B cell (primary cell): ENCODE measurements at regions of chr10 and their contacts with region 1.

Region 1: GRCh38 chr10:69123747-69124562 is at the start of gene VPS26A:
- DNase-seq: peak; percentile 99
- ATAC-seq: peak; percentile 96
- H3K4me3 ChIP-seq: peak within 1 kb of the TSS; percentile 57 to 92 (median 84)
- H3K4me3 Mint-ChIP-seq: peak within 1 kb of the TSS; percentile 93
- H3K27ac ChIP-seq: peak within 1 kb of the TSS; percentile 89 to 95
- H3K27ac Mint-ChIP-seq: peak within 1 kb of the TSS; percentile 98
- H3K4me1 ChIP-seq: peaks cover 12% of the 10 kb centered on the region in 2 donors
- H3K4me1 Mint-ChIP-seq: peaks cover 15% of the 10 kb centered on the region
- H3K27me3 ChIP-seq: no peaks in the 10 kb centered on the region
- H3K27me3 Mint-ChIP-seq: no peaks in the 10 kb centered on the region
- CTCF ChIP-seq: peak; percentile 34
- total RNA-seq, gene VPS26A: 29.9 and 35.3 TPM in 2 replicates

Region 2: GRCh38 chr10:68720793-68721672 is 402.9 kb before region 1 on chr10 and contains the start of gene CCAR1:
- CTCF ChIA-PET with region 1: no interaction called
- POLR2A ChIA-PET with region 1: no interaction called
- intact Hi-C with region 1: loop called (anchors 2 kb)
- DNase-seq: peak; percentile 99
- ATAC-seq: peak; percentile 97
- H3K4me3 ChIP-seq: peak within 1 kb of the TSS; percentile 58 to 96 (median 93)
- H3K4me3 Mint-ChIP-seq: peak within 1 kb of the TSS; percentile 96
- H3K27ac ChIP-seq: peak within 1 kb of the TSS; percentile 81 to 95
- H3K27ac Mint-ChIP-seq: peak within 1 kb of the TSS; percentile 97
- H3K4me1 ChIP-seq: peaks cover 10 to 15% of the 10 kb centered on the region in 2 donors
- H3K4me1 Mint-ChIP-seq: peaks cover 17% of the 10 kb centered on the region
- H3K27me3 ChIP-seq: no peaks in the 10 kb centered on the region
- H3K27me3 Mint-ChIP-seq: no peaks in the 10 kb centered on the region
- CTCF ChIP-seq: no peak
- total RNA-seq, gene CCAR1: 98.9 and 101 TPM in 2 replicates

Region 3: GRCh38 chr10:68955832-68956532 is 168.0 kb before region 1 on chr10 and contains the start of gene DDX21:
- CTCF ChIA-PET with region 1: interaction called, 11 read pairs
- POLR2A ChIA-PET with region 1: no interaction called
- intact Hi-C with region 1: loop called (anchors 1 kb)
- DNase-seq: peak; percentile 93
- ATAC-seq: peak; percentile 82
- H3K4me3 ChIP-seq: peak within 1 kb of the TSS; percentile 92 to 99 (median 95)
- H3K4me3 Mint-ChIP-seq: peak within 1 kb of the TSS; percentile 94
- H3K27ac ChIP-seq: peak within 1 kb of the TSS; percentile 97 to 99
- H3K27ac Mint-ChIP-seq: peak within 1 kb of the TSS; percentile 95
- H3K4me1 ChIP-seq: peaks cover 7 to 32% of the 10 kb centered on the region in 2 donors
- H3K4me1 Mint-ChIP-seq: peaks cover 34% of the 10 kb centered on the region
- H3K27me3 ChIP-seq: no peaks in the 10 kb centered on the region
- H3K27me3 Mint-ChIP-seq: no peaks in the 10 kb centered on the region
- CTCF ChIP-seq: peak; percentile 88
- total RNA-seq, gene DDX21: 40.5 and 43.5 TPM in 2 replicates

Region 4: DNA sequence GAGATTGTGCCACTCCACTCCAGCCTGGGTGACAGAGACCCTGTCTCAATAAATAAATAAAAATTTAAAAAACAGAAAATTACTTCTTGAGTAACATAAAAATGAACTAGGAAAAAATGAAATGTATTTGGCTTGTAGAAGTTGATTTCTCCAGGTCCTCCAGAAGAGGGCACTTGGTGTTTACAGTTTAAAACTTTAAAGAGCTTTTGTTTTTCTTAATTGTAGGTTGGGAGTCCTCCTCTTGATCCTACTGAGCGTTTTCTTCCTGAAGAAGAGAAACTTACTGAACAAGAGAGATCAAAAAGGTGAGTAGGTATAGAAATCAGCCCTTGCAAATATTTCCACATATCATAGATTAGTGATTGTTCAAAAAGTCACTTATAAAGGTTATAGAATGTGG is 119.1 kb before region 1 on chr10:
- CTCF ChIA-PET with region 1: interaction called, 23 read pairs
- POLR2A ChIA-PET with region 1: no interaction called
- intact Hi-C with region 1: no loop called
- DNase-seq: peak; percentile 52
- ATAC-seq: no peak
- H3K4me3 ChIP-seq: no peak overlapping the region
- H3K4me3 Mint-ChIP-seq: no peak overlapping the region
- H3K27ac ChIP-seq: no peak overlapping the region
- H3K27ac Mint-ChIP-seq: no peak overlapping the region
- H3K4me1 ChIP-seq: no peaks in the 10 kb centered on the region
- H3K4me1 Mint-ChIP-seq: no peaks in the 10 kb centered on the region
- H3K27me3 ChIP-seq: no peaks in the 10 kb centered on the region
- H3K27me3 Mint-ChIP-seq: no peaks in the 10 kb centered on the region
- CTCF ChIP-seq: peak; percentile 72

Region 5: GRCh38 chr10:69061305-69062161 is 62.4 kb before region 1 on chr10:
- CTCF ChIA-PET with region 1: no interaction called
- POLR2A ChIA-PET with region 1: no interaction called
- intact Hi-C with region 1: no loop called
- DNase-seq: peak; percentile 38
- ATAC-seq: peak; percentile 69
- H3K4me3 ChIP-seq: peak overlapping the region; percentile 29 to 56 (median 51)
- H3K4me3 Mint-ChIP-seq: peak overlapping the region; percentile 79
- H3K27ac ChIP-seq: peak overlapping the region in 1 of 2 donors; percentile 2
- H3K27ac Mint-ChIP-seq: peak overlapping the region; percentile 12
- H3K4me1 ChIP-seq: peaks cover 6 to 20% of the 10 kb centered on the region in 2 donors
- H3K4me1 Mint-ChIP-seq: peaks cover 33% of the 10 kb centered on the region
- H3K27me3 ChIP-seq: no peaks in the 10 kb centered on the region
- H3K27me3 Mint-ChIP-seq: no peaks in the 10 kb centered on the region
- CTCF ChIP-seq: no peak

Region 6: DNA sequence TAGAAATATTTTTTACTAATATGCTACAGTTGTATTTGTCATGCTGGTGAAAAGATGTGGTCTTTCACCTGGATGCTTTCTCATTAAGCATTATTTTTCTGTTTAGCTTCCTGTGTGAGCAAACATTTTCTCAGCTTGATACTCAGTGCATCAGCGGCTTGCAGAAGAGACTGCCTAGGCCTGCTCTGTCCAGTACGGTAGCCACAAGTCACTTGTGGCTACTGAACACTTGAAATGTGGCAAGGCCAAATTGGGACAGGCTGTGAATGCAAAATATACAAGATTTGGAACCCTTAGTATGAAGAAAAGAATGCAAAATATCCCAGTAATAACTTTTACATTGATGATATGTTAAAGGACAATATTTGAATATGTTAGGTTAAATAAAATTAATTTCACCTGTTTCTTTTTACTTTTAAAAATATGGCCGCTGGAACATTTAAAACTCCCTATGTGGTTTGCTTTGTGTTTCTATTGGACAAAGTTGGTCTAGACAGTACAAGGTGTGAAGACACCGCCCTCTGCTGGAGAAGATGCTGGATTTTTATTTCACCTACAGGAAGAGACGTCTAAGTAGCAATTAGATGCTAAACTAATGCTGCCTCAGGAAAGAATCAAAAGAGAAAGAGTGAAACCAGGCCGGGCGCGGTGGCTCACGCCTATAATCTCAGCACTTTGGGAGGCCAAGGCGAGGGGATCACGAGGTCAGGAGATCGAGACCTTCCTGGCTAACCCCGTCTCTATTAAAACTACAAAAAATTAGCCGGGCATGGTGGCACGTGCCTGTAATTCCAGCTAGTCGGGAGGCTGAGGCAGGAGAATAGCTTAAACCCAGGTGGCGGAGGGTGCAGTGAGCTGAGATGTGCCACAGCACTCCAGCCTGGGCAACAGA is 30.8 kb before region 1 on chr10:
- CTCF ChIA-PET with region 1: interaction called, 12 read pairs
- POLR2A ChIA-PET with region 1: interaction called, 3 read pairs
- intact Hi-C with region 1: loop called (anchors 1 kb)
- DNase-seq: peak; percentile 90
- ATAC-seq: peak; percentile 73
- H3K4me3 ChIP-seq: peak overlapping the region in 1 of 5 experiments; percentile 8
- H3K4me3 Mint-ChIP-seq: no peak overlapping the region
- H3K27ac ChIP-seq: no peak overlapping the region
- H3K27ac Mint-ChIP-seq: no peak overlapping the region
- H3K4me1 ChIP-seq: peaks cover 36 to 37% of the 10 kb centered on the region in 2 donors
- H3K4me1 Mint-ChIP-seq: peaks cover 39% of the 10 kb centered on the region
- H3K27me3 ChIP-seq: no peaks in the 10 kb centered on the region
- H3K27me3 Mint-ChIP-seq: no peaks in the 10 kb centered on the region
- CTCF ChIP-seq: peak; percentile 83

Region 7: GRCh38 chr10:69103784-69104183 is 20.2 kb before region 1 on chr10:
- CTCF ChIA-PET with region 1: no interaction called
- POLR2A ChIA-PET with region 1: no interaction called
- intact Hi-C with region 1: no loop called
- DNase-seq: no peak
- ATAC-seq: no peak
- H3K4me3 ChIP-seq: no peak overlapping the region
- H3K4me3 Mint-ChIP-seq: no peak overlapping the region
- H3K27ac ChIP-seq: no peak overlapping the region
- H3K27ac Mint-ChIP-seq: no peak overlapping the region
- H3K4me1 ChIP-seq: no peaks in the 10 kb centered on the region
- H3K4me1 Mint-ChIP-seq: peaks cover 4% of the 10 kb centered on the region
- H3K27me3 ChIP-seq: no peaks in the 10 kb centered on the region
- H3K27me3 Mint-ChIP-seq: no peaks in the 10 kb centered on the region
- CTCF ChIP-seq: no peak

Region 8: GRCh38 chr10:69222157-69223027 is 98.4 kb after region 1 on chr10:
- CTCF ChIA-PET with region 1: no interaction called
- POLR2A ChIA-PET with region 1: no interaction called
- intact Hi-C with region 1: loop called (anchors 5 kb)
- DNase-seq: peak; percentile 60
- ATAC-seq: peak; percentile 85
- H3K4me3 ChIP-seq: peak overlapping the region in 1 of 5 experiments; percentile 15
- H3K4me3 Mint-ChIP-seq: peak overlapping the region; percentile 53
- H3K27ac ChIP-seq: no peak overlapping the region
- H3K27ac Mint-ChIP-seq: peak overlapping the region; percentile 75
- H3K4me1 ChIP-seq: peaks cover 20 to 29% of the 10 kb centered on the region in 2 donors
- H3K4me1 Mint-ChIP-seq: peaks cover 26% of the 10 kb centered on the region
- H3K27me3 ChIP-seq: no peaks in the 10 kb centered on the region
- H3K27me3 Mint-ChIP-seq: no peaks in the 10 kb centered on the region
- CTCF ChIP-seq: peak; percentile 79

Region 9: GRCh38 chr10:69408318-69409175 is 284.6 kb after region 1 on chr10:
- CTCF ChIA-PET with region 1: no interaction called
- POLR2A ChIA-PET with region 1: no interaction called
- intact Hi-C with region 1: loop called (anchors 1 kb)
- DNase-seq: peak; percentile 95
- ATAC-seq: peak; percentile 84
- H3K4me3 ChIP-seq: peak overlapping the region in 4 of 5 experiments; percentile 24 to 58 (median 40)
- H3K4me3 Mint-ChIP-seq: peak overlapping the region; percentile 81
- H3K27ac ChIP-seq: peak overlapping the region; percentile 67 to 73
- H3K27ac Mint-ChIP-seq: peak overlapping the region; percentile 89
- H3K4me1 ChIP-seq: peaks cover 21 to 39% of the 10 kb centered on the region in 2 donors
- H3K4me1 Mint-ChIP-seq: peaks cover 27% of the 10 kb centered on the region
- H3K27me3 ChIP-seq: peaks cover 0 to 4% (median 1%) of the 10 kb centered on the region in 4 experiments
- H3K27me3 Mint-ChIP-seq: peaks cover 3% of the 10 kb centered on the region
- CTCF ChIP-seq: peak; percentile 91